Heart right ventricle (tissue), 16 donors: ENCODE measurements at regions of chr10 and their contacts with region 1.

Region 1: DNA sequence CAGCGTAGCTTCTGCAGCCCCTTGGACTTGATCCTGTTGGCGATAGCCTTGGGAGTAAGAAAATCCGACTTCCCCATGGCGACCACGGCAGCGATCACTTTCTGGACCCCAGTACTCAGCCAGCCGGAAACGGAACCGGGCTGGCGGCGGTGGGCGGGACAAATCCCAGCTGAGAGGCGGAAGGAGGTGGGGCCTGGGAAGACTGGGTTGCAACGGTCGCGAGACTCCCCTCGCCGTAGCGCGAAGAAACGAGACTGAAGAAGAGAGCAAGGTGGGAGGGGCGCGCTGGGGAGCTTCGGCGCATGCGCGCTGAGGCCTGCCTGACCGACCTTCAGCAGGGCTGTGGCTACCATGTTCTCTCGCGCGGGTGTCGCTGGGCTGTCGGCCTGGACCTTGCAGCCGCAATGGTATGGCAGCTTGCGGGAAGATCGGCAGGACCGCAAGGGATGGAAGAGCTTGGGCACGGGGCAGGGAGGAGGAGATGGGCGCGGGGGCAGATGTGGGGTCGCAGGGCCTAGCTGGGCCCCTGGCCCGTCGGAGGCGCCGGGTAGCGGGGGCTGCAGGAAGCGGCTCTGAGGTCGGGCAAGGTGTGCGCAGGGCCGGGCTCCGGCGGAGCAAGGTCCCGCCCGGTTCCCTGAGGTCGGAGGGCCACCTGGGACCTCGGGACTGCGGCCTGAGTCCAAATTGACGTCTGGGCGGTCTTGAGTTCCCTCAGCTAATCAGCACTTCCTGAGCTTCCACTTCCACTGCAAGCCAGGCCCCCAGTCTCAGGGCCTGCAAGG is at the starts of genes ATP5F1C and KIN:
- DNase-seq: peak; percentile 98
- ATAC-seq: peak; percentile 97 to 99 (median 98)
- H3K4me3 ChIP-seq: peak within 1 kb of the TSS; percentile 63 to 97 (median 92)
- H3K27ac ChIP-seq: peak within 1 kb of the TSS; percentile 82 to 98 (median 95)
- H3K4me1 ChIP-seq: peaks cover 0 to 73% (median 60%) of the 10 kb centered on the region in 9 donors
- H3K27me3 ChIP-seq: no peaks in the 10 kb centered on the region
- CTCF ChIP-seq: no peak
- total RNA-seq, gene ATP5F1C: 565 to 909 (median 770) TPM
- total RNA-seq, gene KIN: 5.4 to 8.5 (median 6.9) TPM

Region 2: GRCh38 chr10:7818295-7819122 is 30.5 kb after region 1 on chr10 and contains the start of gene TAF3:
- intact Hi-C with region 1: loop called in 1 of 10 experiments (anchors 1 kb)
- DNase-seq: peak; percentile 91 to 92
- ATAC-seq: peak; percentile 89 to 95 (median 93)
- H3K4me3 ChIP-seq: peak within 1 kb of the TSS; percentile 67 to 100 (median 96)
- H3K27ac ChIP-seq: peak within 1 kb of the TSS in 9 of 10 donors; percentile 61 to 88 (median 83)
- H3K4me1 ChIP-seq: peaks cover 0 to 29% (median 22%) of the 10 kb centered on the region in 9 donors
- H3K27me3 ChIP-seq: peaks cover 0 to 7% (median 0%) of the 10 kb centered on the region in 7 donors
- CTCF ChIP-seq: no peak
- total RNA-seq, gene TAF3: 9.9 to 14.9 (median 11.2) TPM

Region 3: GRCh38 chr10:9634466-9634865 is 1846.4 kb after region 1 on chr10:
- intact Hi-C with region 1: no loop called
- DNase-seq: no peak
- ATAC-seq: no peak
- H3K4me3 ChIP-seq: no peak overlapping the region
- H3K27ac ChIP-seq: no peak overlapping the region
- H3K4me1 ChIP-seq: no peaks in the 10 kb centered on the region
- H3K27me3 ChIP-seq: no peaks in the 10 kb centered on the region
- CTCF ChIP-seq: no peak